ENCODE measurements at regions of chr15 and their contacts with region 1.

Region 1: GRCh38 chr15:90099868-90100831 is 2.1 kb downstream of the IDH2 start:
- DNase-seq: peak; percentile 74
- H3K4me3 Mint-ChIP-seq: peak overlapping the region; percentile 86
- H3K27ac Mint-ChIP-seq: peak overlapping the region; percentile 98
- H3K4me1 Mint-ChIP-seq: peaks cover 70% of the 10 kb centered on the region
- H3K27me3 Mint-ChIP-seq: peaks cover 8% of the 10 kb centered on the region

Region 2: GRCh38 chr15:90165659-90166421 is 65.7 kb after region 1 on chr15:
- intact Hi-C with region 1: loop called (anchors 2 kb)
- DNase-seq: peak; percentile 75
- H3K4me3 Mint-ChIP-seq: peak overlapping the region; percentile 43
- H3K27ac Mint-ChIP-seq: peak overlapping the region; percentile 80
- H3K4me1 Mint-ChIP-seq: peaks cover 28% of the 10 kb centered on the region
- H3K27me3 Mint-ChIP-seq: peaks cover 4% of the 10 kb centered on the region

Measured in activated CD4-positive, alpha-beta T cell treated with anti-CD3 and anti-CD28 coated beads, Interleukin-2, amount 10 ng/mL, durations not matched to agents 24 days and 14 days (primary cell).